ENCODE measurements at regions of chr3 and their contacts with region 1.

Region 1: GRCh38 chr3:71006810-71007785 is 576.4 kb downstream of the FOXP1 start:
- DNase-seq: no peak
- H3K4me3 ChIP-seq: no peak overlapping the region
- H3K27ac ChIP-seq: peak overlapping the region; percentile 66 to 74 (median 70)
- H3K4me1 ChIP-seq: peaks cover 22 to 68% (median 34%) of the 10 kb centered on the region in 4 donors
- H3K27me3 ChIP-seq: no peaks in the 10 kb centered on the region
- CTCF ChIP-seq: peak; percentile 47 to 59 (median 50)
- EP300 ChIP-seq: no peak
- POLR2A ChIP-seq: no peak

Region 2: GRCh38 chr3:69866988-69867720 is 1139.9 kb before region 1 on chr3:
- in situ Hi-C with region 1: no loop called
- intact Hi-C with region 1: no loop called
- DNase-seq: no peak
- H3K4me3 ChIP-seq: no peak overlapping the region
- H3K27ac ChIP-seq: peak overlapping the region in 3 of 4 donors; percentile 15 to 69 (median 39)
- H3K4me1 ChIP-seq: peaks cover 0 to 15% (median 9%) of the 10 kb centered on the region in 4 donors
- H3K27me3 ChIP-seq: no peaks in the 10 kb centered on the region
- CTCF ChIP-seq: no peak
- EP300 ChIP-seq: no peak
- POLR2A ChIP-seq: no peak

Region 3: DNA sequence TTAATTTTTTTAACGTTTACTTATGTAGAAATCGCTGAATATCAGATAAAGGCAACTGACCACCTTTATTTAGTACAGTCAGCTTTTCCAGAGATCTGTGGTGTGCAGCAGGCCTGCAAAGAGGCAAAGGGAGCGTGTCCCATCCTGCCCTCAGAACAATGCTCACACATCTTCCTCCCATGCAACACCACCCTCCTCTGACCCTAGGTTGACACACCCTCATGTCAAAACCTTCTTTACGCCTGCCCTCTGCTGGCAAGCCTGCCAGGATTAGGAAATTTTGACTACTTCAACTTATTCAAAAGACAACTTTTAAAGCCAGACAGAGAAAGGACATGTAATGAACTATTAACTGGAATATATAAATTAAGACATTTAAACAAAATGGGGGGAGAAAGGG is 62.7 kb after region 1 on chr3:
- in situ Hi-C with region 1: loop called in 1 of 4 experiments (anchors 10 kb)
- intact Hi-C with region 1: no loop called
- DNase-seq: peak; percentile 76
- H3K4me3 ChIP-seq: no peak overlapping the region
- H3K27ac ChIP-seq: peak overlapping the region; percentile 65 to 98 (median 94)
- H3K4me1 ChIP-seq: peaks cover 22 to 76% (median 36%) of the 10 kb centered on the region in 4 donors
- H3K27me3 ChIP-seq: no peaks in the 10 kb centered on the region
- CTCF ChIP-seq: peak; percentile 42 to 65 (median 54)
- EP300 ChIP-seq: no peak
- POLR2A ChIP-seq: no peak